ENCODE measurements at regions of chr1 and their contacts with region 1.

Region 1: DNA sequence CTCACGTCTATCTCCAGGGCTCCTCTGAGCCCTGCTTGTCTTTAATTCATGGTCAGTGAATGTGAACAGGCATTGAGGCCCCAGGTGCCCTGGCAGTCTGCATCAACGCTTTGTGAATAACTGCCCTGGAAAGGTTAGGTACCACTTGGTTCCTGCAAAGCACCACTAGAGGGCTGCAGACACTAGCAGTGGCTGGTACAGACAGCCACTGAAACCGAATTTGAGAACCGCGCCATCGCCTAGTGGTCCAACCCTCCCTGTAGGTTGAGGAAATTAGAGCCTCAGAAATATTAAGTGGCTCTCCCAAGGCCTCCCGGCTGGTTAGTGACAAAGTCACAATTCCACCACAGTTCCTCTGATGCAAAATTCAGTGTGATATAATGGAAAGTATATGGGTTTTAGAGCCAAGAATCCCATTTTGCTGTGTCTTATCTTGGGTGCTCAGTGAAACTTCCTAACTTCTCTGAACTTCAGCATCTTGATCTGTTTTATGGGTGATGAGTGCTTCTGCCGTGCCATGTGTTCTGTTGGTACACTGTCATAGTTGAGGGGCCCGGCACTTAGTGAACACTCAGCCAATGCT is 46.2 kb upstream of the BCL9 start:
- DNase-seq: peak; percentile 77
- ATAC-seq: peak; percentile 91

Region 2: DNA sequence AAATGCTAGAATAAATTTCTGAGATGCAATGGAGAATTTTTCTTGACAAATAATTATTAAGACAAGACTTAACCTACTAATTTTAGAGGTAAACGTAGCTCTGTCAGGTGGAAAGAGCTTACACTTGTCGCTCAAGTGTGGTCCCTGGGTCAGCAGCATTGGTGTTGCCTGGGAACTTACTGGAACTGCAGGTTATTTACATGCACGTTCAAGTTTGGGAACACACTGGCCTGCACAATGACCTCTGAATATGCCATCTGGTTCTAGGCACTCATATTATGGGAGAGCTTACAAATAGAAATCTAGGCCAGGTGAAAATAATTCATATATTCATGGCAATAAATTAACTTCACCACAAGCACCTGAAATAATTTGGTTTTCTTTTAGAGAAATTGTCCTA is 42.3 kb before region 1 on chr1:
- intact Hi-C with region 1: no loop called
- DNase-seq: no peak
- ATAC-seq: no peak

Region 3: DNA sequence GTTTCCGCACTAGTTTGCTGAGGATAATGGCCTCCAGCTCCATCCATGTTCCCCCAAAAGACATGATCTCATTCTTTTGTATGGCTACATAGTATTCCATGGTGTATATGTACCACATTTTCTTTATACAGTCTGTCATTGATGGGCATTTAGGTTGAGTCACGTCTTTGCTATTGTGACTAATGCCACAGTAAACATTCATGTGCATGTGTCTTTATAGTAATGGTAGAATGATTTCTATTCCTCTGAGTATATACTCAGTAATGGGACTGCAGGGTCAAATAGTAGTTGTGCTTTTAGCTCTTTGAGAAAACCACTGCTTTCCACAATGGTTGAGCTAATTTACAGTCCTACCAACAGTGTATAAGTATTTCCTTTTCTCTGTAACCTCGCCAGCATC is 32.1 kb before region 1 on chr1:
- intact Hi-C with region 1: no loop called
- DNase-seq: no peak
- ATAC-seq: no peak

Region 4: GRCh38 chr1:147541672-147542568 is 46.8 kb after region 1 on chr1:
- intact Hi-C with region 1: loop called (anchors 5 kb)
- DNase-seq: peak; percentile 78
- ATAC-seq: peak; percentile 65

Region 5: GRCh38 chr1:147599362-147600118 is 104.5 kb after region 1 on chr1:
- intact Hi-C with region 1: loop called (anchors 5 kb)
- DNase-seq: peak; percentile 99
- ATAC-seq: peak; percentile 95

Region 6: GRCh38 chr1:147627435-147628110 is 132.5 kb after region 1 on chr1:
- intact Hi-C with region 1: loop called (anchors 1 kb)
- DNase-seq: no peak
- ATAC-seq: peak; percentile 68

Region 7: GRCh38 chr1:147640553-147641165 is 145.6 kb after region 1 on chr1:
- intact Hi-C with region 1: loop called (anchors 2 kb)
- DNase-seq: peak; percentile 77
- ATAC-seq: peak; percentile 91

Region 8: GRCh38 chr1:147700042-147701006 is 205.2 kb after region 1 on chr1:
- intact Hi-C with region 1: loop called (anchors 2 kb)
- DNase-seq: no peak
- ATAC-seq: peak; percentile 77

Region 9: GRCh38 chr1:147890177-147890790 is 395.2 kb after region 1 on chr1:
- intact Hi-C with region 1: loop called (anchors 5 kb)
- DNase-seq: no peak
- ATAC-seq: peak; percentile 89